Aorta (tissue), 5 donors: ENCODE measurements at regions of chr1 and their contacts with region 1.

Region 1: GRCh38 chr1:228131766-228132165 is 8.3 kb upstream of the GUK1 start:
- DNase-seq: no peak
- ATAC-seq: no peak
- H3K4me3 ChIP-seq: no peak overlapping the region
- H3K27ac ChIP-seq: no peak overlapping the region
- H3K4me1 ChIP-seq: no peaks in the 10 kb centered on the region
- H3K27me3 ChIP-seq: no peaks in the 10 kb centered on the region

Region 2: GRCh38 chr1:228212966-228213844 is 81.4 kb after region 1 on chr1:
- intact Hi-C with region 1: loop called in 1 of 2 experiments (anchors 5 kb)
- DNase-seq: peak; percentile 90 to 96
- ATAC-seq: peak; percentile 80
- H3K4me3 ChIP-seq: peak overlapping the region; percentile 12 to 14
- H3K27ac ChIP-seq: no peak overlapping the region
- H3K4me1 ChIP-seq: no peaks in the 10 kb centered on the region
- H3K27me3 ChIP-seq: no peaks in the 10 kb centered on the region

Region 3: GRCh38 chr1:228236744-228237143 is 105.0 kb after region 1 on chr1:
- intact Hi-C with region 1: no loop called
- DNase-seq: no peak
- ATAC-seq: no peak
- H3K4me3 ChIP-seq: no peak overlapping the region
- H3K27ac ChIP-seq: no peak overlapping the region
- H3K4me1 ChIP-seq: no peaks in the 10 kb centered on the region
- H3K27me3 ChIP-seq: no peaks in the 10 kb centered on the region

Region 4: DNA sequence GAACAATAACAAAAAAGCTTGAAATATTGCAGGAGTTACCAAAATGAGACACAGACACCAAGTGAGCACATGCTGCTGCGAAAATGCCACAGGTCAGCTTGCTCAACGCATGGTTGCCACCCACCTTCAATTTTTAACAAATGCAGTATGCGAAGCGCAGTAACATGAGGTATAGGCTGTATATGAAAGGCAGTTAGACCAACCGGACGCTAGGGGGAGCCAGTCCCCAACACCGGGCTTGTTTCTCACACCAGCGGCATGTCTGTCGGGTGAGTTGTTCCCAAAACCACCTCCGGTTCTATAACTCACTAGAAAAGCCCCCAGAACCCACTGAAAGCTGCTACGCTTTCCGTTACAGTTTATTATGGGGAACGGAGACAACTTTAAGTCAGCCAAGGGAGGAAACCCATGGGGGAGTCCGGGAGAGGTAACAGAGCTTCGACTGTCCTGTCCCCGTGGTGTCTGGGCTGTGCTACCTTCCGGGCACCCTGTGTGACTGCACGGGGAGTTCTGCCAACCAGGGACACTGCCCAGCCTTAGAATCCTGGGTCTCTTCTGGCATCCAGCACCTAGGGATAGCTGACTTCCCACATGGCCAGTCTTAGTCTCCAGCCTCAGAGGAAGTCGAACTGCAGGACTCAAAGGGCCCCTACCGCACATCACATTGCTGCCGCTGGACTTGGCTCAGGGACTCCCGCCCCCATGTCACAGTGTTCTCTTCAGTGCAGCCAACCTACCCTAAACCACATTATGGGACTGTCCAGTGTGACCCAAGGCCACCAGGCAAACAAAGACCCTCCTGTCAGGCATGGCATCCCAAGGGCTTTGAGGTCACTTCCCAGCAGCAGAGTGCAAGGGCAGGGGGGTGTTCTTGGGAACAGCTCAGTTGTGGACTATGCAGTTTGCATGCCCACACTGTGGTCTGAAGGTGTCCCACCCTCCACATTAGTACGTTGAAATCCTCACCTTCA is 369.4 kb after region 1 on chr1:
- intact Hi-C with region 1: loop called in 1 of 2 experiments (anchors 5 kb)
- DNase-seq: peak; percentile 89 to 93
- ATAC-seq: peak; percentile 91
- H3K4me3 ChIP-seq: no peak overlapping the region
- H3K27ac ChIP-seq: no peak overlapping the region
- H3K4me1 ChIP-seq: no peaks in the 10 kb centered on the region
- H3K27me3 ChIP-seq: no peaks in the 10 kb centered on the region